A673 (cell line): ENCODE measurements at regions of chr2 and their contacts with region 1.

Region 1: GRCh38 chr2:48471048-48471474 is 58.9 kb upstream of the STON1 start:
- DNase-seq: peak; percentile 79
- H3K4me3 ChIP-seq: peak overlapping the region; percentile 3
- H3K27ac ChIP-seq: no peak overlapping the region
- H3K4me1 ChIP-seq: peaks cover 7% of the 10 kb centered on the region
- H3K27me3 ChIP-seq: no peaks in the 10 kb centered on the region
- CTCF ChIP-seq: peak; percentile 77

Region 2: GRCh38 chr2:48589170-48589767 is 118.2 kb after region 1 on chr2:
- CTCF ChIA-PET with region 1: no interaction called
- POLR2A ChIA-PET with region 1: no interaction called
- intact Hi-C with region 1: loop called (anchors 10 kb)
- DNase-seq: peak; percentile 48
- H3K4me3 ChIP-seq: no peak overlapping the region
- H3K27ac ChIP-seq: no peak overlapping the region
- H3K4me1 ChIP-seq: no peaks in the 10 kb centered on the region
- H3K27me3 ChIP-seq: no peaks in the 10 kb centered on the region
- CTCF ChIP-seq: peak; percentile 80

Region 3: GRCh38 chr2:48638261-48638660 is 167.2 kb after region 1 on chr2:
- CTCF ChIA-PET with region 1: no interaction called
- POLR2A ChIA-PET with region 1: no interaction called
- intact Hi-C with region 1: no loop called
- DNase-seq: no peak
- H3K4me3 ChIP-seq: no peak overlapping the region
- H3K27ac ChIP-seq: no peak overlapping the region
- H3K4me1 ChIP-seq: no peaks in the 10 kb centered on the region
- H3K27me3 ChIP-seq: peaks cover 4% of the 10 kb centered on the region
- CTCF ChIP-seq: no peak

Region 4: DNA sequence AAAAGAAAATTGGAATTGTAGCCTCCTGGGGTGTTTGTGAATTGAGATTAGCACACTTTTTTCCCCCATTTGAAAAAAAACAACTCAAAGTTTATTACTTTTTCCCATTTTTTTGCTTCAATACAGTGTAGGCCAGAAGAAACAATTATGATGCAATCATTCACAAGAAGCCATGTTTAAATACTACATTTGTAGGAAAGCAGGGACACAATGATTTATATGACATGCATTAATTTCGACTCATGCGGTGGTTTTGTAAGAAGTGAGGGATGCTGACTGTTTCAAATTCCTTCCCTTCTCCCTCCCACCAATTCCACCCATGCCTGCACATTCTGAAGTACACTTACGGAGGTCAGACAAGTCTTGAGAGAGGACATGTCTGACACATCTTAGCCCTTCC is 1457.5 kb after region 1 on chr2:
- CTCF ChIA-PET with region 1: no interaction called
- POLR2A ChIA-PET with region 1: no interaction called
- intact Hi-C with region 1: no loop called
- DNase-seq: no peak
- H3K4me3 ChIP-seq: no peak overlapping the region
- H3K27ac ChIP-seq: no peak overlapping the region
- H3K4me1 ChIP-seq: no peaks in the 10 kb centered on the region
- H3K27me3 ChIP-seq: no peaks in the 10 kb centered on the region
- CTCF ChIP-seq: no peak